ENCODE measurements at regions of chr14 and their contacts with region 1.

Region 1: GRCh38 chr14:24372701-24373416 is 4.9 kb downstream of the NFATC4 start:
- DNase-seq: no peak
- H3K4me3 ChIP-seq: no peak overlapping the region
- H3K27ac ChIP-seq: no peak overlapping the region
- H3K4me1 ChIP-seq: peaks cover 3 to 27% (median 18%) of the 10 kb centered on the region in 4 experiments
- H3K27me3 ChIP-seq: no peaks in the 10 kb centered on the region
- CTCF ChIP-seq: no peak
- EP300 ChIP-seq: no peak
- POLR2A ChIP-seq: no peak
- RAD21 ChIP-seq: no peak

Region 2: GRCh38 chr14:24315807-24316603 is 56.9 kb before region 1 on chr14:
- CTCF ChIA-PET with region 1: no interaction called
- POLR2A ChIA-PET with region 1: no interaction called
- DNase-seq: peak in 1 of 2 experiments; percentile 78
- H3K4me3 ChIP-seq: no peak overlapping the region
- H3K27ac ChIP-seq: no peak overlapping the region
- H3K4me1 ChIP-seq: no peaks in the 10 kb centered on the region; a peak in 2 of 7 replicates
- H3K27me3 ChIP-seq: peaks cover 0 to 42% (median 31%) of the 10 kb centered on the region in 4 experiments; a peak in 6 of 7 replicates
- CTCF ChIP-seq: peak; percentile 49 to 52 (median 50)
- EP300 ChIP-seq: no peak
- POLR2A ChIP-seq: no peak
- RAD21 ChIP-seq: peak; percentile 6 to 37; a peak in 3 of 4 replicates

Region 3: DNA sequence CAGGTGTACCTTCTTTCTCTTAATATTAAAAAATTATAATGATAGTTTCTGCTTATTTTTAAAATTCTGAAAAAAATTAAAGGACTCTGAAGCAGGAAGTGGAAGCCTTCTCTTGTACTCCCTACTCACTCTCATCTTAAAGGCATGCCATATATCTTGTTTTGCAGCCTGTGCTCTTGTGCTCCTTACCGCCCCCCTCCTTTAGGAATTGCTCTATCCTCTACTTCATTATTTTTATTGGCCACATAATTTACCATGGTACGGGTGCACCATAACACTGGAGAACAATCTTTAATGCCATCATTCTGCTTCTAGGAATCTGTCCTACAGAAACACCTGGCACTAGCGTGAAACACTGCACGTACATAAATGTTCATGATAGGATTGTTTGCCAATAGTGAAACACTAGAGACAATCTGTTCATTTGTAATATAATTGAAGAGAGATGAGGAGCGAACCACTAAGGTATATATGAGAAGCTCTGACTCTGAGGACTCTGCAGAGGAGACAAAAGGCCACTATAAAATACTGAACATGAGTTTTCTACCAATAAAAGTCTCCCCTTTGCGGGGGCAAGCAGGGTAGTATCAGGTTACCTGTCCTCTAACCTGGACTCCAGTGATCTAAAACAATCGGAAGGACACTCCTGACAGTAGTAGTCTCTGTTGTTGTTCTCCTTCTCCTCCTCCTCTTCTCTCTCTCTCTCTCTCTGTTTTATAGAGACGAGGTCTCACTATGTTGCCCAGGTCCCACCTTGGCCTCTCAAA is 19.6 kb after region 1 on chr14:
- CTCF ChIA-PET with region 1: interaction called, 40 read pairs
- POLR2A ChIA-PET with region 1: interaction called, 27 read pairs
- DNase-seq: no peak
- H3K4me3 ChIP-seq: no peak overlapping the region
- H3K27ac ChIP-seq: no peak overlapping the region
- H3K4me1 ChIP-seq: peaks cover 0 to 5% (median 0%) of the 10 kb centered on the region in 4 experiments; a peak in 2 of 7 replicates
- H3K27me3 ChIP-seq: peaks cover 0 to 3% (median 1%) of the 10 kb centered on the region in 4 experiments; a peak in 2 of 7 replicates
- CTCF ChIP-seq: peak in 1 of 3 experiments; percentile 26; a peak in 1 of 4 replicates
- EP300 ChIP-seq: no peak
- POLR2A ChIP-seq: no peak
- RAD21 ChIP-seq: no peak

Region 4: DNA sequence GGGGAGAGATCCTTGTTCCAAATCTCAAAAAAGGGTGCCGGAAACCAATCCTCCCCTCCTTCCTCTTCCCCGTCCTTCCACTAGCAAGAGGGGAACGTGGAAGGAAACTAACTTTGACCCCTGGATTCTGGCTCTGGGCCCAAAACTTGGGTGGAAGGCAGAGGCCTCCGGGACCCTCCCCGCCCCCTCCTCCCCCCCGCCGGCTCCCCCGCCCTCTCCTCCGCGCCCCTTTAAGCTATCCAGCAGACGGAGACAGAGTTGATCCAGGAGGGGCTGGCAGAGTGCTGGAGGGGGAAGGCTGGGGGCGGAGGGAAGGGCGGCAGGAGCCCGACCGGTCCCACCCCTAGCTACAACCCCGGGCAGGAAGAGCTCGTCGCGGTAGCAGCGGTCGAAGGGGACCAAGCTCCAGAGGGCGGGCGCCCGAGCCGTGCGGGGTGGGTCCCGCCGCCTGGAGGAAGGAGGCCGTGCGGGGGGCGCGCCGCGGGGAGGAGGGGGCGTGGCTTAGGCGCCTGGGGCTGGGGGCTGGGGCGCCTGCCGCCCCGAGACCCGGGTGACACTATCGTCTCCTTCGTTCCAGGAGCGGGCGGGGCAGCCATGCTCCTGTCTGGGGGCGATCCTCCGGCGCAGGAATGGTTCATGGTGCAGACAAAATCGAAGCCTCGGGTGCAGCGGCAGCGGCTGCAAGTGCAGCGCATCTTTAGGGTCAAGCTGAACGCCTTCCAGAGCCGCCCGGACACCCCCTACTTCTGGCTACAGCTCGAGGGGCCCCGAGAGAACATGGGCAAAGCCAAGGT is 26.0 kb after region 1 on chr14 and contains the start of gene NYNRIN:
- CTCF ChIA-PET with region 1: interaction called, 35 read pairs
- POLR2A ChIA-PET with region 1: interaction called, 6 read pairs
- DNase-seq: peak in 1 of 2 experiments; percentile 81
- H3K4me3 ChIP-seq: peak within 1 kb of the TSS; percentile 68 to 80 (median 78)
- H3K27ac ChIP-seq: no peak within 1 kb of the TSS
- H3K4me1 ChIP-seq: peaks cover 0 to 14% (median 10%) of the 10 kb centered on the region in 4 experiments
- H3K27me3 ChIP-seq: peaks cover 0 to 3% (median 0%) of the 10 kb centered on the region in 4 experiments; a peak in 1 of 7 replicates
- CTCF ChIP-seq: no peak
- EP300 ChIP-seq: no peak
- POLR2A ChIP-seq: no peak
- RAD21 ChIP-seq: no peak
- total RNA-seq, gene NYNRIN: 18.3 and 19.6 TPM in 2 replicates

Region 5: GRCh38 chr14:24411443-24412389 is 38.9 kb after region 1 on chr14:
- CTCF ChIA-PET with region 1: interaction called, 78 read pairs
- POLR2A ChIA-PET with region 1: interaction called, 4 read pairs
- DNase-seq: peak in 1 of 2 experiments; percentile 56
- H3K4me3 ChIP-seq: no peak overlapping the region
- H3K27ac ChIP-seq: no peak overlapping the region
- H3K4me1 ChIP-seq: no peaks in the 10 kb centered on the region
- H3K27me3 ChIP-seq: 0 out of 7 replicates have a peak, but pooled peaks cover 0 to 2% (median 0%) of the 10 kb centered on the region in 4 experiments
- CTCF ChIP-seq: peak; percentile 66 to 89 (median 84)
- EP300 ChIP-seq: no peak
- POLR2A ChIP-seq: no peak
- RAD21 ChIP-seq: peak; percentile 66 to 76

Measured in H1 (cell line).